Right ventricle myocardium inferior (tissue), 1 donor: ENCODE measurements at regions of chr9 and their contacts with region 1.

Region 1: GRCh38 chr9:136949817-136950655 is 2.0 kb upstream of the LCN12 start:
- DNase-seq: peak; percentile 98
- ATAC-seq: peak; percentile 89

Region 2: GRCh38 chr9:136799854-136800657 is 150.0 kb before region 1 on chr9:
- intact Hi-C with region 1: no loop called
- DNase-seq: peak; percentile 90
- ATAC-seq: peak; percentile 81

Region 3: GRCh38 chr9:136978073-136978864 is 28.2 kb after region 1 on chr9:
- intact Hi-C with region 1: loop called (anchors 1 kb)
- DNase-seq: peak; percentile 91
- ATAC-seq: peak; percentile 53

Region 4: DNA sequence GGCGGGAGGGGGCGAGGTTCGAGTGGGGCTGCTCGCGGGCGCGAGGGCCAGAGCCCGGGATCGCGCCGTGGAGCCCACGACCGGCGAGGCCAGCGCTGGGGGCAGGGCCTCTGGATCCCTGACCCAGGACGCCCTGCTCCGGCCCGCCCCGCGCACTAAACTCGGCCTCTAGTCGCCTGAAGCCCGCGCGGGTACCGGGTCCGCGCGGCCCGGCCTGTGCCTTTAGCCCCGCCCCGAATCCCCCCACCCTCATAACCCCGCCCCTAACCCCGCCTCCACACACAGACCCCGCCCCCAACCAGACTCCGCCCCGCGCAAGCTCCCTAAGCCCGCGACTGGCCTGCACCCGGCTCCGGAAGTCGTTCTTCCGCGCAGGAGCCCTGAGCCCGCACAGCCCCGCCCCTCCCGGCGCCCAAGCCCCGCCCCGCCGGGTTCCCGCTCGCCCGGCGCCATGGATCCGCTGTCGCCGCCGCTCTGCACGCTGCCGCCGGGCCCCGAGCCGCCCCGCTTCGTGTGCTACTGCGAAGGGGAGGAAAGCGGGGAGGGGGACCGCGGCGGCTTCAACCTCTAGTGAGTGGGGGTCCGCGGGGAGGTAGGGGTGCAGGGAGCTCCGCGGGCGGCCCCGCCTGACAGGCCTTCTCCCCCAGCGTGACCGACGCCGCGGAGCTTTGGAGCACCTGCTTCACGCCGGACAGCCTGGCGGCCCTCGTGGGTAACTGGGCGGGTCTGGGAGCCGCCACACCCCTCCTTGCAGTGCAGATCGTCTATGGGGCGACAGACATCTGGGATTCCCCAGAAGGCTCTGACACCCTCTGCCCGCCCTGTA is 42.2 kb after region 1 on chr9 and contains the start of gene PAXX:
- intact Hi-C with region 1: loop called (anchors 2 kb)
- DNase-seq: peak; percentile 97
- ATAC-seq: peak; percentile 97
- total RNA-seq, gene PAXX: 26.9 TPM

Region 5: DNA sequence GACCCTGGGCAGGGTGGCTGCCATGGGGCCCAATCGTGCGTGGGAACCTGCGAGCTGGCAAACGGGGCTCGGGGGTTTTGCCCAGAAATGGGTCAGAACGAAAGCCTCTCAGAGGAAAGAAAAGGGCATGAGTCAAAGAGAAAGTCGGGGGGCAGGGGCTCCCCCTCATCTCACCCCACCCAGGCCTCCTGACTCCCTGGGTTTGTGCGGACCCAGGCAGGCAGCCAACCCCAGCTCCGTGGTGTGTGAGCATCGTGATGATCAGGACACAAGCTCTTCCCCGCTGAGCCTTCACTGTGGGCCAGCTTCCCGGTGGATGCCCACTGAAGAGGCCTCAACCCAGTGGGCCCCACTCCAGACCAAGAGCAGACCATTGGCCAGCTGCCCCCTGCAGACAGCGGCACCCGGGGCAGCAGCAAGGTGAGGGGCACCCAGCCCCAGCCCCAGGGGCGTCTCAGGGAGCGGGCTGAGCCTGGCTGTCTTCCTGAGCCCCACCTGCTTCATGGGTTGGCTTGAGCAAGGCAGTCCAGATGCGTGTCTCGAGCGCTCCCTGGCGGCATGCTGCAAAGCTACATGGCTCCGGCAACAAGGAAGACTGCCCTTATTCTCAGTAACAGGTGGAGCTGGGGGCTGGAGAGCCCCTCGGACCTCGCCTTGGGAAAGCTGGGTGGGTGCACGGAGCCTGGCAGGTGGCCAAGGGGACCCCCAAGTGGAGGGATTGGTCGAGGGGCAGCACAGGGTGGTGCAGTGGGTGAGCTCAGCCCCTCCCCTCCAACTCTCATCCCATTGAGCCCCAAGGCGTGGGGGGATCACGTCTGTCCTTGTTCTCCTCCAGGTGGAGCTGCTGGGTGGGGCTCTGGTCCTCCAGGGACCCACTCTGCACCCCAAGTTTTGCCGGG is 85.1 kb after region 1 on chr9:
- intact Hi-C with region 1: loop called (anchors 2 kb)
- DNase-seq: peak; percentile 93
- ATAC-seq: peak; percentile 70